Ascending aorta (tissue), 2 donors: ENCODE measurements at regions of chr2 and their contacts with region 1.

Region 1: GRCh38 chr2:27078267-27079194 is at the start of gene EMILIN1:
- DNase-seq: peak; percentile 79 to 95
- H3K4me3 ChIP-seq: peak within 1 kb of the TSS; percentile 61 to 87
- H3K27ac ChIP-seq: peak within 1 kb of the TSS; percentile 93 to 97
- H3K4me1 ChIP-seq: peaks cover 14 to 41% of the 10 kb centered on the region in 2 donors
- H3K27me3 ChIP-seq: no peaks in the 10 kb centered on the region
- CTCF ChIP-seq: no peak
- total RNA-seq, gene EMILIN1: 301 TPM

Region 2: DNA sequence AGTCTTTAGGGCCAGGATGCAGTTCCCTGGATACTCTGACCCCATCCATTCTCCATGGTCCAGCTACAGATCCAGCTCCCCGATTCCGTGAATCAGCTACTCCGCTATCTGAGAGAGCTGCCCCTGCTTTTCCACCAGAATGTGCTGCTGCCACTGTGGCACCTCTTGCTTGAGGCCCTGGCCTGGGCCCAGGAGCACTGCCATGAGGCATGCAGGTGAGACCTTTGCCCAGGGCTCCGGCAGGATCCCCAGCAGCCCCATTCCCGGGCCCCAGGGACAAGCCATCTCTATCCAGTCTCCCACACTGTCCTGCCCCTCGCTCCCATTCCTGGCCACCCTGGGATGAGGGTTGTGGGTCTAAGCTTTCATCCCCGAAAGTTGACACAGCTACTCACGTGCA is 38.2 kb before region 1 on chr2:
- intact Hi-C with region 1: no loop called
- DNase-seq: no peak
- H3K4me3 ChIP-seq: no peak overlapping the region
- H3K27ac ChIP-seq: no peak overlapping the region
- H3K4me1 ChIP-seq: peaks cover 0 to 2% of the 10 kb centered on the region in 2 donors
- H3K27me3 ChIP-seq: no peaks in the 10 kb centered on the region
- CTCF ChIP-seq: no peak

Region 3: GRCh38 chr2:27050281-27050995 is 28.1 kb before region 1 on chr2:
- intact Hi-C with region 1: loop called (anchors 2 kb)
- DNase-seq: peak; percentile 72 to 96
- H3K4me3 ChIP-seq: peak overlapping the region; percentile 71 to 85
- H3K27ac ChIP-seq: peak overlapping the region; percentile 85 to 93
- H3K4me1 ChIP-seq: peaks cover 0 to 4% of the 10 kb centered on the region in 2 donors
- H3K27me3 ChIP-seq: no peaks in the 10 kb centered on the region
- CTCF ChIP-seq: peak; percentile 51 to 64 (median 55)